ENCODE measurements at regions of chr12 and their contacts with region 1.

Region 1: DNA sequence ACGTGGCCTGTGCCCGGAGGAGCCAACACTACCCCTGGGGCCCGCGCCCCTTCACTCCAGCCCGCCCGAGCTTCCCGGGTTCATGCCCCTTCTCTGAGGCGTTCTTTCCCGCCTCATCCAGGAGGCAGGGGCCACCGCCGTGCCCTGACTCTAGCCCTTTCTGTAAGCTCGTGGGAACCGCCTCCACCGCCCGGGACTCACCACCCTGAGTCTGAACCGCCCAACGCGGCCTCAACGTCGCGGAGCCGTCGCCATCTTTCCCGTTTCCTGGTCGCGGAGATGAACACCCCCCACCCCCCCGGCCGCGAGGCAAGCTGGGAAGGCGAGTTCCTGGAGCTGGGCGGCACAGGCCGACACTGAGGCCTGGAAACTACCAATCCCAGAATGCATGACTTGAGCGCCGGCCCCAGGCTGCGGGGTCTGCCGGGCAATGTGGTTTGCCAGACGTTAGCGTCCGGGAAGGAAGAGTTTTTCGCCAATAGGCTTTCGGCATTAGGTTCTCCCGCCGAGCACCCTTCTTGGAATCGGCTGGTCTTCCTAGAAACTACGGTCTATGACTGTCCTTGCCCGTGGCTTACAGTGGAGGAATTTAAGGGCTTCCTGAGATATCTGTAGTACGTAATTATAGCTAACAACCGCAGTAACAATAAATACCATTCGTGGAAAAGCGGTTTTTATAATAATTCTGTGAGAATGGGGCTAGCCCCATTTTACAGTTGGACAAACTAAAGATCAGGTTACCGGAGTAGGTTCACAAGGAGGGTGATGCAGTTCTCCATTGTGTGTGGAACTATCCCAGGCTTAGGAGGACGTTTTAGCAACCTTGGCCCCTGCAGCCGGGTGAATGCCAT is at the start of gene DDX23:
- DNase-seq: peak; percentile 97
- CTCF ChIP-seq: no peak

Region 2: DNA sequence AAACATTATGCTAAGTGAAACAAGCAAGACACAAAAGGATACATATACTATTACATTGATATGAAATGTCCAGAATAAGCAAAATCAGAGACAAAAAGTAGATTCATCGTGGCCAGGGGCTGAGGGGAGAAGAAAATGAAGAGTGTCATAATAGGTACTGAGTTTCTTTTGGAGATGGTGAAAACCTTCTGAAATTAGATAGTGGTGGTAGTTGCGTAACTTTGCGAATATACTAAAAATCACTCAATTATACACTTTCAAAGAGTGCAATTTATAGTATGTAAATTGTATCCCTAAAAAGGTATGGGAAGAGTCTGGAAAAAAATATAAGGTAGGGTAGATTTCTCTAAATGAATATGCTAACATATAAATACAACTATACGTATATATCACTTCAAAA is 192.2 kb before region 1 on chr12:
- CTCF ChIA-PET with region 1: no interaction called
- POLR2A ChIA-PET with region 1: no interaction called
- DNase-seq: no peak
- CTCF ChIP-seq: no peak

Region 3: DNA sequence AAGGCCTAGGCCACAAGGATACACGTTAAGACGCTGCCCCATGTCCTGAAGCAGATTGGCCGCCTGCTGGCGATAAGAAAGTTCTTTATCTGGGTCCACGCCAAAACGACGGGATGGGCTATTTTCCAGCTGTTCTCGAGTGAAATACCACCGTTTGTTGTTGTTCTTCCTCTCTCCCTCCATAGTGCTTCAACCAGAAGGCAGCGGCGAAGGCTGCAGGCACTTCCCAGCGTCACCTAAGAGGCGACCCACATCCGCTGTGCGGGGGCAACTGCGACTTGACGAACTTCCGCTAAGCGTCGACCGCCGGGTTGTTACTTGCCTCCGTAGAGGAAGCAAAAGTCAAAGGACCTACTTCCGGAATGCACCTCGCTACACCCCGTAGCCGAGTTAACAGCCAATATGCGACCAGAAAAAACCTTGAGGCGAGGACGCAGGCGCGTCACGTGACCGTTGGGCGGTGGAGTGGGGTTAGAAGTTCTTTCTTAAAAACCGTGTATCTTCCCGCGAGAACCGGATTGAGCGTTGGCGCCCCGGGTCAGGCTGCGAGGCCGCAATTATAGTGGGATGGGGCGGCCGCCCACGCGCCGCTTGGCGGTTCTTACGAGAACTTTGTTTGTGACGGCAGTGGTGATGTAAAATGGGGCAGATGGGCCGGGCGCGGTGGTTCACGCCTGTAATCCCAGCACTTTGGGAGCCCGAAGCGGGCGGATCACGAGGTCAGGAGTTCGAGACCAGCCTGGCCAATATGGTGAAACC is 135.4 kb before region 1 on chr12 and contains the start of gene CCNT1:
- CTCF ChIA-PET with region 1: no interaction called
- POLR2A ChIA-PET with region 1: no interaction called
- DNase-seq: peak; percentile 99
- CTCF ChIP-seq: no peak

Region 4: GRCh38 chr12:48832321-48833060 is 19.6 kb before region 1 on chr12:
- CTCF ChIA-PET with region 1: interaction called, 16 read pairs
- POLR2A ChIA-PET with region 1: interaction called, 4 read pairs
- DNase-seq: no peak
- CTCF ChIP-seq: no peak

Region 5: GRCh38 chr12:48873096-48873495 is 21.0 kb after region 1 on chr12:
- CTCF ChIA-PET with region 1: interaction called, 127 read pairs
- POLR2A ChIA-PET with region 1: no interaction called
- DNase-seq: no peak
- CTCF ChIP-seq: no peak

Region 6: DNA sequence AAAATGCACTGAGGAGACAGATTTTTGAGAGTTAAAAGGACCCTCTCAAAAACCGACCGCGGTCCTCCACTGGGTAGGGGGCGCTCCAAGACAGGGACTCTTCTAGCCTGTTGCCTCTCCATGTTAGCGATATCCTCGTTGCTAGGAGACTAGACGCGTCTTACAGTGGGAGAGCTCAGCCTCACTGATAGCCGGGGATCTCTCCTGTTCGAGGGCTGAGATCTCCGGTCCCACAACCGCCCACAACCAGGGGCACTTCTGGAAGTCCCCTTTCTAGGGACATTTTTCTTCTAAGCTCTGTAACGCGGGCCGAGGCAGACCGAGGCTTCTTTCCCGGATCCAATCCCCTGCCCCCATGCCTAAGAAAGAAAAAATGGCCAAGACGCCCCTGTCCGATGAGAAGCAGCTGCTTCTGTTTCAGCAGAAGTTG is 51.9 kb after region 1 on chr12:
- CTCF ChIA-PET with region 1: interaction called, 33 read pairs
- POLR2A ChIA-PET with region 1: no interaction called
- DNase-seq: peak; percentile 80
- CTCF ChIP-seq: peak; percentile 70

Region 7: GRCh38 chr12:48946205-48946604 is 94.1 kb after region 1 on chr12:
- CTCF ChIA-PET with region 1: interaction called, 13 read pairs
- POLR2A ChIA-PET with region 1: no interaction called
- DNase-seq: no peak
- CTCF ChIP-seq: no peak

Region 8: GRCh38 chr12:48977315-48978281 is 125.5 kb after region 1 on chr12:
- CTCF ChIA-PET with region 1: interaction called, 40 read pairs
- POLR2A ChIA-PET with region 1: no interaction called
- DNase-seq: peak; percentile 87
- CTCF ChIP-seq: peak; percentile 72

Region 9: DNA sequence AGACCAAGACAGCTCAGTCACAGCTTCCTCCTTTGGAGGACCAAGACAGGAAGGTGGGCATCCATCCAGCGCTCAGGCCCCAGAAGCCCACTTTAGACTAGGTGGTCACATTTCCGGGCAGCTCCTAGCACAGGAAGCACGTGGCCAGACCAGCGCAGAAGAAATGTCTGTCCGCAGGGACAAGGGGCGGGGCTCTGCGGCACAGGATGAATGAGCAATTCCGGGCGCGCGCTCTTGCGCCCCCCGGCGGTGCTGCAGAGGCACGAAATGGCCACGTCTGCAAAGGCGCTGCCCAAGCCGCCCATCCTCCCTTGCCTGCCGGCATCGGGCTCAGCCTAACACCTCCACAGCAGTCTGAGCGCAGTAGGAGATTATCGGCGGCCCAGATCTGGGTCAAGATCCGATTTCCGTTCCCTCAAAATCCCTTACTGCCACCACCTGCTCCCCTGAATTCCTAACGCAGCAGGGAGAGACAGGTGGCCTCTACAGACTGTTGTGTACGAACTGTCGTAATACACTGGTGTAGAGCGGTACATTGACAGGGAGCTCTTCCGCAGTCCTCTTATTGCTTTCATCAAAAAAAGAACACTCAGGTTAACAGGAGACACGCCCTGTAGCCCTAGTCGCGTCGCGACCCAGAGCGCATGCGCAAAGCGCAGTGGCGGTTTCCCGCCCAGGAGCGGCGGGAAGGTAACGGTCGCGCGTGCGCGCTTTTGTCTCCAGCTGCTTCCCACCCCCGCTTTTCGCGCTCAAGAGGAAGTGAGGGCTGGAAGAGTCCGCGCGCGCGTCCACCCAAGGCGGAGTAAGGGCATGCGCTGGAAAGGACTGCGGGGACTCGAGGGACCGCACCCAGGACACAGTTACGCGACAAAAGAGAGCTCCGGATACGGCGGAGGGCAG is 278.3 kb after region 1 on chr12:
- CTCF ChIA-PET with region 1: no interaction called
- POLR2A ChIA-PET with region 1: no interaction called
- DNase-seq: peak; percentile 91
- CTCF ChIP-seq: peak; percentile 95

Measured in GM10248 (cell line).